B cell (primary cell): ENCODE measurements at regions of chr22 and their contacts with region 1.

Region 1: GRCh38 chr22:40177738-40178416 is at the start of gene TNRC6B:
- DNase-seq: peak; percentile 93
- ATAC-seq: peak; percentile 90
- H3K4me3 ChIP-seq: peak within 1 kb of the TSS; percentile 56 to 100 (median 72)
- H3K4me3 Mint-ChIP-seq: peak within 1 kb of the TSS; percentile 84
- H3K27ac ChIP-seq: peak within 1 kb of the TSS; percentile 65 to 79
- H3K27ac Mint-ChIP-seq: peak within 1 kb of the TSS; percentile 84
- H3K4me1 ChIP-seq: peaks cover 41 to 42% of the 10 kb centered on the region in 2 donors
- H3K4me1 Mint-ChIP-seq: peaks cover 61% of the 10 kb centered on the region
- H3K27me3 ChIP-seq: no peaks in the 10 kb centered on the region
- H3K27me3 Mint-ChIP-seq: no peaks in the 10 kb centered on the region
- CTCF ChIP-seq: no peak
- total RNA-seq, gene TNRC6B: 210 and 248 TPM in 2 replicates

Region 2: DNA sequence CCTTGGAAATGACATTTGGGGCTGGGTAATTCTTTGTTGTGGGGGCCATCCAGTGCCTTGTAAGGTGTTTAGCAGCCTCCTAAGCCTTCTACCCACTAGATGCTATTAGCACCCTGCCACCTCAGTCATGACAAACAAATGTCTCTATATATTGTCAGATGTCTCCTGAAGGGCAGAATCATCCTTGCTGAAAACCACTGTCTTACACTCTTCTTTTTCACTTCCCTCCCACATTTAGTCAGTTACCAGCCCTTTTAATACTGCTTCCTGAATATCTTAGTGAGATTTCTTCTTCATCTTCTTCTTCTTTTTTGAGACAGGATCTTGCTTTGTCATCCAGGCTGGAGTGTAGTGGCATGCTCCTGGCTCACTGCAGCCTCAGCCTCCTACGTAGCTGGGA is 32.9 kb after region 1 on chr22:
- CTCF ChIA-PET with region 1: interaction called, 3 read pairs
- POLR2A ChIA-PET with region 1: no interaction called
- intact Hi-C with region 1: loop called (anchors 2 kb)
- DNase-seq: peak; percentile 74
- ATAC-seq: peak; percentile 89
- H3K4me3 ChIP-seq: no peak overlapping the region
- H3K4me3 Mint-ChIP-seq: peak overlapping the region; percentile 54
- H3K27ac ChIP-seq: peak overlapping the region in 1 of 2 donors; percentile 54
- H3K27ac Mint-ChIP-seq: peak overlapping the region; percentile 75
- H3K4me1 ChIP-seq: peaks cover 43 to 52% of the 10 kb centered on the region in 2 donors
- H3K4me1 Mint-ChIP-seq: peaks cover 72% of the 10 kb centered on the region
- H3K27me3 ChIP-seq: no peaks in the 10 kb centered on the region
- H3K27me3 Mint-ChIP-seq: no peaks in the 10 kb centered on the region
- CTCF ChIP-seq: no peak

Region 3: DNA sequence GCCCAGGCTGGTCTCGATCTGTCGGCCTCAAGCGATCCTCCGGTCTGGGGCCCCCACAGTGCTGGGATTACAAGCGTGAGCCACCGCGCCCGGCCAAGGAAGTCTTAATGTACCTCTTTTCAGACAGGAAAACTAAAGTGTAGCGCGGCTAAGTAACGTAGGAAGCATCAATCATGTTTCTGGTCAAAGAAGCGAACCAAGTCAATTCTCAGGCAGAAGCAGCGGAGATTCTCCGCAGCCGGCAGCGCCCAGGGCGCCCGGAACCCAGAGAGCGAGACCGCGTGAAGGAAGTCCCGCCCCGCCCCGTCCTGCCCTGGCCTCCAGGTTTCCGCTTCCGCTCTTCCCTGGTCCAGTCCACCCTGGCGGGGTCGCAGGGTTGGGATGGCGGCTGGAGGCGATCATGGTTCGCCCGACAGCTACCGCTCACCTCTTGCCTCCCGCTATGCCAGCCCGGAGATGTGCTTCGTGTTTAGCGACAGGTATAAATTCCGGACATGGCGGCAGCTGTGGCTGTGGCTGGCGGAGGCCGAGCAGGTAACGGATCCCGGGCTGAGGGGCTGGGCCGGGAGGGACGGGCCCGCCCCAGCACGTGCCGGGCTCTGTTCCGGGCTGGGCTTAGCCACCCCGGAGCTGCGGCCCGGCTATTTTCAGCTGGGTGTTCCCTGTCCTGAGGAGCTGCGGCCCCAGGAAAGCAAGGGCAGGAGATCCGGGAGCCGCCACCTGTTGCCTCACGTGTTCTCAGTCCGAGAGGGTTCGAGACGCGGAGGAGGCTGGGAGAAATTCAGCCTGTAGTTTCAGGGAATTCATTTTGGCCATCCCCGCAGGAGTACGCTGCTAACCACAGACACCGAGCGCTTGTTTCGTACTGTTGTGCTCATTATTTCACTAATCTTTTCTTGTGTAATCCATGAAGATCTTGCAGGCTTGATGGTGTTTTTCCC is 168.6 kb after region 1 on chr22 and contains the start of gene ADSL:
- CTCF ChIA-PET with region 1: no interaction called
- POLR2A ChIA-PET with region 1: interaction called, 4 read pairs
- intact Hi-C with region 1: loop called (anchors 1 kb)
- DNase-seq: peak; percentile 91
- ATAC-seq: peak; percentile 89
- H3K4me3 ChIP-seq: peak within 1 kb of the TSS; percentile 84 to 92 (median 88)
- H3K4me3 Mint-ChIP-seq: peak within 1 kb of the TSS; percentile 98
- H3K27ac ChIP-seq: peak within 1 kb of the TSS; percentile 74 to 75
- H3K27ac Mint-ChIP-seq: peak within 1 kb of the TSS; percentile 97
- H3K4me1 ChIP-seq: peaks cover 11 to 27% of the 10 kb centered on the region in 2 donors
- H3K4me1 Mint-ChIP-seq: peaks cover 32% of the 10 kb centered on the region
- H3K27me3 ChIP-seq: no peaks in the 10 kb centered on the region
- H3K27me3 Mint-ChIP-seq: no peaks in the 10 kb centered on the region
- CTCF ChIP-seq: no peak
- total RNA-seq, gene ADSL: 56.3 and 63.8 TPM in 2 replicates